ENCODE measurements at regions of chr9 and their contacts with region 1.

Region 1: DNA sequence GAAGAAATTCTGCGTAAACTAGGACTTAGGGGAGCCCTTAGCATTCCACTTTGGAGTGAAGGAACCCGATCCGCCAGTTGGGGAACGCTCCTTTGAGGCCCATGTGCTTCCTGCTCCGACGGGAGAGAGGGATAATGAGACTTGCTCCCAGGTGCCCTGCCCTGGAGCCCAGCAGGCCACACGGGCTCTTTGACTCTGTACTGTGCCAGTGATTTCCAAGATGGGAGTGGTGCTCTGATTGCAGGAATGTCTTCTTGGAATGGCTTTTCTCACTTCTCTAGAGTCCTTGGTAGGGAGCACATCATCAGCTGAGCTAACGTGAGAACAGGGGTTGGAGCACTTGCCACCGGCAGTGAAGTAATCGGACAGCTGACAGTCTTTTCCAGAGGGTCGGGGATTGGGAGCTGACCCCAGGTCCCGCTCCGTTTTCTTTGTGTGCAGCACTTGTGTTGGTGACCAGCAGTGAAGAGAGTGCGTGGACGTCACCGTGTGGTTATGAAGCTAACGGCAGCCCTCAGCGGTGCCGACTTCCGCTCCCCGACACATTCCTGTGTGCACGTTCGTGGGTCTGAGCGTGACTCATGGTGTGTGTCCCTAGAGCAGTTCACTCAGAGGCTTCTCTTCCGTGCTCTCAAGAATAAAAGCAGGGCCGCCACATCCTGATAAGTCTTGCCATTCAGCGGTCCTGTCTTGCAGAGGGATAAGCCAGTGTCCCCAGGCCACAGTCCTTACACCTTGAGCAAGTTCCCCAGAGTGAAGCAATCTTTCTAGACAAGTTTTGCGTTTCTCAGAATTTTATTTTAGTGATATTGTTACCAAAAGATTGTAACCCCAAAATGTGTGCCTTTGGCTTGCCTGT is 25.6 kb downstream of the ABL1 start:
- DNase-seq: peak; percentile 69
- H3K4me3 ChIP-seq: no peak overlapping the region
- H3K27ac ChIP-seq: peak overlapping the region; percentile 54 to 83 (median 78)
- H3K4me1 ChIP-seq: peaks cover 4 to 55% (median 32%) of the 10 kb centered on the region in 4 donors
- H3K27me3 ChIP-seq: no peaks in the 10 kb centered on the region
- CTCF ChIP-seq: peak in 2 of 5 experiments; percentile 17 to 28
- EP300 ChIP-seq: no peak
- POLR2A ChIP-seq: peak; percentile 9

Region 2: GRCh38 chr9:130265431-130266235 is 595.1 kb before region 1 on chr9 and contains the start of gene HMCN2:
- in situ Hi-C with region 1: no loop called
- intact Hi-C with region 1: no loop called
- DNase-seq: no peak
- H3K4me3 ChIP-seq: peak within 1 kb of the TSS; percentile 20 to 42 (median 29)
- H3K27ac ChIP-seq: peak within 1 kb of the TSS; percentile 52 to 89 (median 82)
- H3K4me1 ChIP-seq: peaks cover 3 to 32% (median 12%) of the 10 kb centered on the region in 4 donors
- H3K27me3 ChIP-seq: peaks cover 62% of the 10 kb centered on the region
- CTCF ChIP-seq: no peak
- EP300 ChIP-seq: no peak
- POLR2A ChIP-seq: no peak
- total RNA-seq, gene HMCN2: 7.8 to 40.0 (median 15.2) TPM

Region 3: GRCh38 chr9:130707225-130707976 is 153.3 kb before region 1 on chr9:
- in situ Hi-C with region 1: loop called in 3 of 4 experiments (anchors 5 to 10 kb)
- intact Hi-C with region 1: loop called (anchors 5 kb)
- DNase-seq: peak; percentile 76
- H3K4me3 ChIP-seq: no peak overlapping the region
- H3K27ac ChIP-seq: no peak overlapping the region
- H3K4me1 ChIP-seq: peaks cover 0 to 13% (median 11%) of the 10 kb centered on the region in 4 donors
- H3K27me3 ChIP-seq: no peaks in the 10 kb centered on the region
- CTCF ChIP-seq: peak; percentile 81 to 87 (median 87)
- EP300 ChIP-seq: no peak
- POLR2A ChIP-seq: no peak

Region 4: GRCh38 chr9:130712564-130713285 is 148.0 kb before region 1 on chr9:
- in situ Hi-C with region 1: loop called in 3 of 4 experiments (anchors 5 to 10 kb)
- intact Hi-C with region 1: loop called (anchors 5 kb)
- DNase-seq: peak; percentile 98
- H3K4me3 ChIP-seq: peak overlapping the region; percentile 78 to 97 (median 94)
- H3K27ac ChIP-seq: peak overlapping the region; percentile 96 to 99 (median 98)
- H3K4me1 ChIP-seq: peaks cover 0 to 44% (median 30%) of the 10 kb centered on the region in 4 donors
- H3K27me3 ChIP-seq: no peaks in the 10 kb centered on the region
- CTCF ChIP-seq: no peak
- EP300 ChIP-seq: no peak
- POLR2A ChIP-seq: peak; percentile 85

Region 5: GRCh38 chr9:130770679-130771442 is 89.8 kb before region 1 on chr9:
- in situ Hi-C with region 1: loop called in 3 of 4 experiments (anchors 5 to 25 kb)
- intact Hi-C with region 1: loop called (anchors 2 kb)
- DNase-seq: no peak
- H3K4me3 ChIP-seq: no peak overlapping the region
- H3K27ac ChIP-seq: peak overlapping the region; percentile 78 to 88 (median 84)
- H3K4me1 ChIP-seq: peaks cover 22 to 63% (median 47%) of the 10 kb centered on the region in 4 donors
- H3K27me3 ChIP-seq: no peaks in the 10 kb centered on the region
- CTCF ChIP-seq: peak; percentile 60 to 72 (median 62)
- EP300 ChIP-seq: no peak
- POLR2A ChIP-seq: no peak

Region 6: GRCh38 chr9:130805510-130806326 is 55.0 kb before region 1 on chr9:
- in situ Hi-C with region 1: no loop called
- intact Hi-C with region 1: loop called (anchors 2 kb)
- DNase-seq: no peak
- H3K4me3 ChIP-seq: no peak overlapping the region
- H3K27ac ChIP-seq: peak overlapping the region in 2 of 4 donors; percentile 15 to 24
- H3K4me1 ChIP-seq: peaks cover 0 to 11% (median 8%) of the 10 kb centered on the region in 4 donors
- H3K27me3 ChIP-seq: no peaks in the 10 kb centered on the region
- CTCF ChIP-seq: no peak
- EP300 ChIP-seq: no peak
- POLR2A ChIP-seq: no peak

Region 7: DNA sequence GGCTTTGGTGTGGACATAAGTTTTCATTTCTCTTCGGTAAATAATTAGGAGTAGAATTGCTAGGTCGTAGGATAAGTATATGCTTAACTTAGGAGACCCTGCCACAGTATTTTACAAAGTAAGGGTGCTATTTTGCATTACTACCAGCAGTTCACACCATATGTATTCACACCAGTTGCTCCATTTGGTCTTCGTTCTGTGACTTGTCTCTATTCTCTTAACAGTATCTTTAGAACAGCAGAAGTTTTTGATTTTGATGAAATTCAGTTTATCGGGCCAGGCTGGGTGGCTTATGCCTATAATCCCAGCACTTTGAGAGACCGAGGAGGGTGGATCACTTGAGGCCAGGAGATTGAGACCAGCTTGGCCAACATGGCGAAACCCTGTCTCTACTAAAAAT is 42.8 kb before region 1 on chr9:
- in situ Hi-C with region 1: no loop called
- intact Hi-C with region 1: loop called (anchors 1 kb)
- DNase-seq: no peak
- H3K4me3 ChIP-seq: no peak overlapping the region
- H3K27ac ChIP-seq: no peak overlapping the region
- H3K4me1 ChIP-seq: peaks cover 0 to 6% (median 0%) of the 10 kb centered on the region in 4 donors
- H3K27me3 ChIP-seq: no peaks in the 10 kb centered on the region
- CTCF ChIP-seq: no peak
- EP300 ChIP-seq: no peak
- POLR2A ChIP-seq: no peak

Region 8: DNA sequence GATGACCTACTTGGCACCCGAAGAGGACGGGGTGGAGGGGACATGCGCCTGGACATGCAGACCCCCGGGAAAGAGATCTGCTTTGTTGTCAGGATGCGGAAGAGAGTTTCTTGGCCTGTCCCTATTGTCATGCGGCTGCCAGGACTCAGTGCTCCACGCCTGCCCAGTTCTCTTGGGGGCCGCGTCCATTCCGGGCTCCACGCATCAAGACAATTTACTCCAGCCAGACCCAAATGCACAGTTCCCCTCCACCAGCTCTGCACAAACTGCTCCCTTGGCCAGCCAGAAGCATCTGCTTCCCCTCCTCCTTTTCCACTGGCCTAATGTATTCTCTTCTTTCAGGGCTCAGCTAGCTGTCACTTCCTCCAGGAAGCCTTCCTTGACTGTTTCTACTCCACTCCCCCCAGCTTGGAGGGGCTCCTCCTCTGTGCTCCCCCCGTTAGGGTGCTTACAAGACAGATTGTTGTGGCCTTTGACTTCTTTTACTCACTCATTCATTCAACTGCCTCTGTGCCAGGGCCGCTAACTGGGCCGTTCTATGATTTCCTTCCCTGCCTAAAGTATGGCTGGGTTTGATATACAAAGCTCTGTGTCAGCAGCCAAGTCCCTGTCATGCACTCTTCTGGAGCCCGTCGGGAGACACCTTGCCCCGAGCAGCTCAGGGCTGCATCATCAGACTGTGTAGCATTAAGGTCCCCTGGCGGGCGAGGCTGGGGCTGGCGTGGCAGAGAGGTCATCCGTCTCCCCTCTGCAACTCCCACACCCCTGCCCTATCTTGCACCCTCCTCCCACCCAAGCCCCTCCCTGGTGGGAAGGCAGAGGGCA is 71.8 kb after region 1 on chr9:
- in situ Hi-C with region 1: no loop called
- intact Hi-C with region 1: loop called (anchors 1 kb)
- DNase-seq: no peak
- H3K4me3 ChIP-seq: no peak overlapping the region
- H3K27ac ChIP-seq: no peak overlapping the region
- H3K4me1 ChIP-seq: peaks cover 0 to 20% (median 6%) of the 10 kb centered on the region in 4 donors
- H3K27me3 ChIP-seq: peaks cover 63% of the 10 kb centered on the region
- CTCF ChIP-seq: no peak
- EP300 ChIP-seq: no peak
- POLR2A ChIP-seq: no peak

Region 9: GRCh38 chr9:130973169-130973936 is 112.7 kb after region 1 on chr9:
- in situ Hi-C with region 1: no loop called
- intact Hi-C with region 1: no loop called
- DNase-seq: no peak
- H3K4me3 ChIP-seq: no peak overlapping the region
- H3K27ac ChIP-seq: no peak overlapping the region
- H3K4me1 ChIP-seq: no peaks in the 10 kb centered on the region
- H3K27me3 ChIP-seq: peaks cover 32% of the 10 kb centered on the region
- CTCF ChIP-seq: no peak
- EP300 ChIP-seq: no peak
- POLR2A ChIP-seq: no peak